G401 (cell line): ENCODE measurements at regions of chr14 and their contacts with region 1.

Region 1: DNA sequence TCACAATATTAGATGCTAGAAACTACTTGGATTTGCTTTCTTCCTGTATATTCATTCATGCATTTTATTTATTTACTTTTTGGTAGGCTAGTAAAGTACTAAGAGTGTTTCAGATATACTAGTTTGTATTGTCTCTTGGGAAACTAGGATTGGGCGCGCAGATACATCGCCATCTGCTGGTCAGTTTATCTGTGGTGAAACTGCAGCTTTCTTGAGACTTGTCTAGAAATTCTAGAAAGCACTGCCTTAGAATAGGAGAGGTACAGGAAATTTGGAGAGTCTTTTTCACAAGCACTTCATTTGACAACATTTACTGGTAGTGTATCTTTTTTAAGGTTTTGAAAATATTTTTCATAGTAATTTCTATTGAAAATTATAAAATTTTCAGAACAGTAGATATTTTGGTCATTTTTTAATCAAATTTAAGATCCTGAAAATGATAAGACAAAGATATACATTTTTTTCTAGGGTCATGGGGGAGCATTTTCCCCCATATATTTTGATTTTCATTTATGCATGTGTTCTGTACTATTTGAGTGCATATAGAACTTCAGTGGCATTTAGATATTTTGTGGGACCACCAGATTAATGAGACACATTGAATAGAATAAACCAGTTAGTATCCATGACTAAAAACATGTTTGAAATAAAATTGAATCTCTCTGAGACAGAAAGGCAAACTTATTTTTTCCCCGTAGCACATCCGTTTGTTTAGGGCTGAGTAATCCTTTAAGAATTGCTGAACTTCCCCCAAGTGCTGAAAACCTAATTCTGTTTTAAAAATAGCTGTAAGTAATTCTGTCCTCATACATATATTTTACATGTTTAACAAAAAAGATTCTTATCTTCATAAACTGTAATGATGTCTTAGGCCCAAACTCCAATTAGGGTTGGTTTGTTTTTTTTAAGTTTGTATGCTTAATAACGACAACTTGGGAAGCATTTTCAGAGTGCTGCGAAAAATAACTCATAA is 44.5 kb downstream of the SLC38A6 start:
- DNase-seq: peak; percentile 78

Region 2: GRCh38 chr14:60656686-60657455 is 368.7 kb before region 1 on chr14:
- in situ Hi-C with region 1: loop called (anchors 10 kb)
- DNase-seq: no peak